ENCODE measurements at regions of chr6 and their contacts with region 1.

Region 1: DNA sequence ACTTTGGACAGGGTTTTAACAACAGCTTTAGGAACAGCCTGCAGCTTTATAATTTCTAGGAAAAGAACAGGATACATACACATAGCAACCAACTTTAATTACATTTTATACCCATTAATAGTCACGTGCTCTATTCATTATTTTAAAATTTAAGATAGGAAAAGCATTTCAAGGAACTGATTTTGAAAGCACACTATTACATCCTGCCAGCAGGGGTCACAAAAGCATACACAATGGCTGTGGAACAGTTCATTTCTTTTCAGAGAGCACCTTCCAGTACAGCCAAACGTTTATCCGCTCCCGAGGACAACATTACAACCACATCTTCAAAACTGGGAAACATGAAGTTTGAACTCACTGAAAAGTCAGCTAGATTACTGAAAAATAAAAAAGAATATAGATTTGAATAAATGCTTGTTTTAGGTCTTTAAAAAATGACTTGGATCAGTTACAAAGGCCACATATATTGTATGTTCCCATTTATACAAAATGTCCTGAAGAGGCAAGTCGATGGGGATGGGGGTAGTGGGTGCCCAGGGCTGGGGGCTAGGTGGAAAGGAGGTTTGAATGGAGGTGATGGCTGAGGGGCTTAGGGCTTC is 104.6 kb upstream of the EXOC2 start:
- DNase-seq: peak; percentile 59

Region 2: DNA sequence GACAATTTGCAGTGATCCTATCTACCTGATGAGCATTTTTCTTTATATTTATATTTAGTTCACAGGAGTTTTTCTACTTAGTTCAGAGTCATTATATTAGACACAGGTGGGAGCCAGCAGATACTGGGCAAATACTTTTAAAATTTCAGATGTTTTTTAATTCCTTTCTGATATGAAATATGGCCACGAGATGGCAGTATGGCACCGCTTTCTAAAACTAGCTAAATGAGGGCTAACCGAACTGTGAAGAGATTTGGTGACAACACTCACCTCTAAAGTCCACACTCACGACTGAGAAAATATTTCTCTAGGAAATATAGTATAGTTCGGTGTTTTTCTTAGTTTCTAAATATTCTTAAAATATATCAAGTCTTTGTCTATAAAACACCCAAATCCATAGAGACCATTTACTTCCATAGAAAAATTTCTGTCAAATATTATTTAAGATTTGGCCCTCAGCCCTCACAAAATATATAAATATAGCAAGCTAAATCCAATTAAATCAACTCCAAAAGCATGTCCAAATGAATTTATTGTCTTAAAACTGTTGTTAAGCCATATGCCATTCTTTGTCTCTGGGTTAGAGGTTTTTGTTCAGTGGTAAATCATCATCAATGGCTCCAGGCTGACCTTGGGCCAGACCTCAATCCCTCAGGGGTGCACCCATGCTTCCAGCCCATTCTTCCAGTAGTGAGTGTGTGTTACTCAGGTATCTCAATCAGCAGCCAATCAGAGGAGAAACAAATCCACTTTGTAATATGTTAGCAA is 204.3 kb before region 1 on chr6:
- in situ Hi-C with region 1: loop called (anchors 25 kb)
- DNase-seq: peak; percentile 81

Region 3: DNA sequence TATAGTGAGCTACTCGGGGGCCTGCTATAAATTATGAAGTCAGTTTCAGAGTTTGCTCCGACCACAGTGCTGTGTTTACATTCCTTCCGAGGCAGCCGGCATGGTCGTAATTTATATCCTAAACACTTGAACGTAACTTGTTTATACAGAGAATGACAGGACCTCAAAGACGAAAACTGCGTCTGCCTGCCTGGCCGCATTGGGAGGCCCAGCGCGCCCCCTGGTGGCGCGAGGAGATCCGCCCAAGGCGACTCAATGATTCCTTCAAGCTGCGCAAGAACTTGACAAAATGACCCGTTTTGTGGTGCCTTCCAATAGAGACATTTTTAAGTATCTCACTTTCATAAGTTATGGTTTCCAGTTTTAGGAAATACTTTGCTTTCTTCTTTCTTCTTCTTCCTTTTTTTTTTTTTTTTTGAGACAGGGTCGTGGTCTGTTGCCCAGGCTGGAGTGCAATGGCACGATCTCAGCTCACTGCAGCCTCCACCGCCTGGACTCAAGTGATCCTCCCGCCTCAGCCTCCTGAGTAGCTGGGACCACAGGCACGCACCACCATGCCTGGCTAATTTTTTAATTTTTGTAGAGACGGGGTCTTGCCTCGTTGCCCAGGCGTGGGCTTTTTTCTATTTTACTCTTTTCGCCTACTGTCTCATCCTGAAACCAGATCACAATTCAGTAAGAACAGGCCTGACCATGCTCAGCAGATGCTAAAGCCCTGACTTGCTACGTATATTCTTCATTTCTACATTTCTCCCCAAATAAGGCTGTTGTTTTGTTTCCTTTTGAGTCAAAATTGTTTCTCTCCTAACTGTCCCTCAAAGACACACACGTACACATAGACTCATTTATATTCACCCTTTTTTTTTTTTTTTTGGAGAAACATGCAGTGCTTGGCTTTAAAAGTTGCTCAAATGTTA is 599.6 kb after region 1 on chr6:
- in situ Hi-C with region 1: loop called (anchors 25 kb)
- DNase-seq: peak; percentile 71

Measured in KBM-7 (cell line).